ENCODE measurements at regions of chr1 and their contacts with region 1.

Region 1: DNA sequence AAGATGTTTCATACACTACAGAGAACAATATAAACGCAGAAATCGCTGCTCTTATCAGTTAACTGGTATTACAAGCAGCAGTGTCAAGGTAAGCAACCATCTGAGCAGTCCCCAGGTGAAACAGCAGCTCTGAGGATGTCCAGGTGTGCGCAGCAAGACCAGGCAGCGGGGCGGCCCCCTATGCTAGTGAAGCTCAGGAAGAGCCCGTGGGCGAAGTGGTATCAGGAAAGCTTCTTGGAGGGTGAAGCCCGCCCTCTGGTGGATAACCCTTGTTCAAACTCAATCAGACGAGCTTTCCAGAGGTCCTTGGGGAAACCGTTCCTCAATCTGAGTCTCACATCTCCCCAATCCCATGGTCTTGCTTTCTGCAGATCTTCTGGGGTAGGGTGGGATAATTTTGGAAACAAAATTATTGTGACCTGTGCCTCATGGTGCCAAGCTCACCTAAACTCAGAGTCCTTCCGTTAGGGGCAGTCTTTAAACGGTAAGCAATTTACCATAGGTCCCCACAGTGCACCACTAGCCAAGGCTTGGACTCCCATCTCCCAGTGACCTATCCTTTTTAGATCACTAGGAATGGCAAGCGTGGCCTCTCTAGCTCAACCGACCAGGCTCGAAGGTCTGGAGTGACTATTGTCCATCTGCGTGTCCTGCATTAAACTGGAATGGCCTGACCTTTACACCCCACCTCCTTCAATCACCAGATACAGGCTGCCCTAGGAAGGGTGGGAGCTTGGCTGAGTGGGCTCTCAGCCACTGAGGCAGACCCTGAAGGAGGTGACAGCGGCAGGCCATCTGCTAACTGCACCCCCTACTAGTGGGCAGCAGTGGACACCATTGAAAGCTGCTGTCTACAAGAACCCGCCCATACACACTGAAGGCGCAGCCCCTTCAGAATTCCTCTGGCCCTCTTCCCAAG is 13.6 kb upstream of the FAM110D start:
- DNase-seq: peak; percentile 90

Region 2: DNA sequence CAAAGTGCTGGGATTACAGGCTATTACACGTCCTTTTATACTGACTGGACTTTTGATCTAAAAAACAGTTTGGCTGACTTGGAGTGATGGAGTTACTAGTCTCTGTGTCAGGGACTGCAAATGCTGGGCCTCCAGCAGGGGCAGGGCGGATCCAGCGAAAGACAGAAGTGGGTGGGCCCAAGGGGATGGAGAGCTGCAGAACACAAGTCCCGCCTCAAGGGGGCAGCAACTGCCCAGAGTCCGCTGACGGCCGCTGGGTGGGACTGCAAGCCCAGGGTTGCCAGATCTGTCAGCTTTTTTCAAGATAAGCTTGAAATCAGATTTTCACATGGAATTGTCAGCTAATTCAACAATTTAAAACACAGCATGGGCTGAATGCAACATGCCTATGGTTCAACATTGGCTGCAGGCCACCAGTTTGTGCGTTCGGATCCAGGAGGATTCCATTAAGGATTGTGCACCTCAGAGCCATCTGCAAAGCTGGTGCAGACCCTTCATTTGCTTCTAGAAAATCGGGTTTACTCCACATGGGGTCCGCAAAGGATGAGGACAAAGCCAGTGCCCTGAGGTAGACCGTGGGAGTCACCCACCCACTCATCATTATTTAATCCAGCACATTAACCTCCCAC is 249.8 kb before region 1 on chr1:
- intact Hi-C with region 1: loop called (anchors 5 kb)
- DNase-seq: peak; percentile 91

Region 3: DNA sequence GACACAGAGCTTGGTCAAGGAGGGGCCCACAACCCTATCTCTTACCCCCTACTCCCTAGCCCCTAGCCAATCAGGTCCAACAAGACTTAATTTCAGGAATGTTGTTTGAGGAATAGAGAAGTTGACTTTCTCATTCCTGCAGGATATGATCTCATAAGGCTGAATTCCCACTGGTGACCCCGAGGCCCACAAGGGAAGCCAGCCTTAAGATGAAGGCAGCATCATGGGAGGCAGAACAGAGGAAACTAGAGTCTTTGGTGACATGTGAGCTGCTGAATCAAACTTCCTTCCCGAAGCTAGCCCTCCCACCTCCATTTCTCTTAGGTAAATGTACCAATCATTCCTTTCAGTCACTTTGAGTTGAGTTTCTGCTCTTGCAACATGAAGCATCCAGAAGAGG is 42.8 kb before region 1 on chr1:
- intact Hi-C with region 1: loop called (anchors 2 kb)
- DNase-seq: no peak

Measured in cardiac septum (tissue), 1 donor.